Stomach (tissue), 19 donors: ENCODE measurements at regions of chr15 and their contacts with region 1.

Region 1: GRCh38 chr15:56245871-56246814 is 2.5 kb upstream of the RFX7 start:
- DNase-seq: peak; percentile 93 to 95
- H3K4me3 ChIP-seq: peak overlapping the region; percentile 22 to 34 (median 30)
- H3K27ac ChIP-seq: peak overlapping the region; percentile 54 to 94 (median 81)
- H3K4me1 ChIP-seq: peaks cover 29 to 55% (median 38%) of the 10 kb centered on the region in 4 donors
- H3K27me3 ChIP-seq: no peaks in the 10 kb centered on the region
- CTCF ChIP-seq: peak in 6 of 7 experiments; percentile 39 to 99 (median 96)
- EP300 ChIP-seq: no peak
- POLR2A ChIP-seq: no peak

Region 2: GRCh38 chr15:56428821-56429458 is 182.8 kb after region 1 on chr15:
- intact Hi-C with region 1: loop called (anchors 10 kb)
- DNase-seq: peak in 1 of 2 donors; percentile 44
- H3K4me3 ChIP-seq: no peak overlapping the region
- H3K27ac ChIP-seq: no peak overlapping the region
- H3K4me1 ChIP-seq: no peaks in the 10 kb centered on the region
- H3K27me3 ChIP-seq: no peaks in the 10 kb centered on the region
- CTCF ChIP-seq: peak in 4 of 7 experiments; percentile 17 to 55 (median 36)
- EP300 ChIP-seq: no peak
- POLR2A ChIP-seq: no peak